ENCODE measurements at regions of chr12 and their contacts with region 1.

Region 1: GRCh38 chr12:4269279-4269991 is 4.1 kb upstream of the CCND2 start:
- DNase-seq: peak; percentile 91
- H3K4me3 Mint-ChIP-seq: peak overlapping the region; percentile 95
- H3K27ac Mint-ChIP-seq: peak overlapping the region; percentile 90
- H3K4me1 Mint-ChIP-seq: peaks cover 26% of the 10 kb centered on the region
- H3K27me3 Mint-ChIP-seq: peaks cover 13% of the 10 kb centered on the region

Region 2: DNA sequence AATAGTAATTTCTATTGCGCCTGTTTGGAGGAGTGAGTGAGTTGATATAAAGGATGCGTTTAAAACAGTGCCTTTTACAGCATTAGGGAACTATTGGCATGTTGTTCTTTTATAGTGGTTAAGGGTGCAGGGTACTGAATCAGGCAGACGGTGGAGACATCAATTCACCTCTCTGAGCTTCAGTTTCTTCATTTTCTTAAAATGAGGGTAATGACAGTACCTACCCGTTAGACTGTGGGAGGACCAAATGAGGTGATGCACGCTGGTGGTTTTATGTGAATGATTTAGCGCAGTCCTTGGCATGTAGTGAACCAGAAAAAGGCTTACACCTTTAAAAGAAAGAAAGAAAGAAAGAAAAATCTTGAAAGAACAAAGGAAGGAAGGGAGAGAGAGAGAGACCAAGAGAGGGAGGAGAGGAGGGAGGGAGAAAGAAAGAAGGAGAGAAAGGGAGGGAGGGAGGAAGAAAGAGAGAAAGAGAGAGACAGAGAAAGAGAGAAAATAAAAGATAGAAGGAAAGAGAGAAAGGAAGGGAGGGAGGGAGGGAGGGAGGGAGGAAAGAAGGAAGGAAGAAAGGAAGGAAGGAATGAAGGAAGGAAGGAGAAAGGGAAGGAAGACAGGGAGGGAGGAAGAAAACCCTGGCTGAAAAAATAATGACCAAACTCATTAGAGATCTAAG is 18.1 kb before region 1 on chr12:
- intact Hi-C with region 1: loop called (anchors 2 kb)
- DNase-seq: no peak
- H3K4me3 Mint-ChIP-seq: no peak overlapping the region
- H3K27ac Mint-ChIP-seq: peak overlapping the region; percentile 65
- H3K4me1 Mint-ChIP-seq: peaks cover 9% of the 10 kb centered on the region
- H3K27me3 Mint-ChIP-seq: peaks cover 11% of the 10 kb centered on the region

Region 3: DNA sequence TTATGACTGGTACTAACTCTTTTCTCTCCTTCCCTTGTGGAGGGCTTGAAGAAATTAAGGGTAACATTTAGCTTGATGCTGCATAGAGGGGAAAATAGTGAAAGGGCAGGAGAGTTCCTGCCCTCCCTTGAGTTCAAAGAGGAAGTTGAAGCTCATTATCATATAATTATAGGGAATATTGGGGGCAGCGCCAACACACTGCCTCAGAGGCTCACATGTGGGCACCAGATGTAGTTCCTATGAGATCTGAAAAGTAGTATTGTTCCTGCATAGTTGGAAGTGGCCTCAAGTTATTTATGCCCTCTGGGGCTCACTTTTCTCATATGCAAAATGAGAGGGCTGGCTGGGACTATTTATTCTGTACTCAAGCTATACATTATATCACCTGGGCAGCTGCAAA is 143.0 kb after region 1 on chr12:
- intact Hi-C with region 1: no loop called
- DNase-seq: no peak
- H3K4me3 Mint-ChIP-seq: no peak overlapping the region
- H3K27ac Mint-ChIP-seq: no peak overlapping the region
- H3K4me1 Mint-ChIP-seq: peaks cover 32% of the 10 kb centered on the region
- H3K27me3 Mint-ChIP-seq: peaks cover 38% of the 10 kb centered on the region

Region 4: DNA sequence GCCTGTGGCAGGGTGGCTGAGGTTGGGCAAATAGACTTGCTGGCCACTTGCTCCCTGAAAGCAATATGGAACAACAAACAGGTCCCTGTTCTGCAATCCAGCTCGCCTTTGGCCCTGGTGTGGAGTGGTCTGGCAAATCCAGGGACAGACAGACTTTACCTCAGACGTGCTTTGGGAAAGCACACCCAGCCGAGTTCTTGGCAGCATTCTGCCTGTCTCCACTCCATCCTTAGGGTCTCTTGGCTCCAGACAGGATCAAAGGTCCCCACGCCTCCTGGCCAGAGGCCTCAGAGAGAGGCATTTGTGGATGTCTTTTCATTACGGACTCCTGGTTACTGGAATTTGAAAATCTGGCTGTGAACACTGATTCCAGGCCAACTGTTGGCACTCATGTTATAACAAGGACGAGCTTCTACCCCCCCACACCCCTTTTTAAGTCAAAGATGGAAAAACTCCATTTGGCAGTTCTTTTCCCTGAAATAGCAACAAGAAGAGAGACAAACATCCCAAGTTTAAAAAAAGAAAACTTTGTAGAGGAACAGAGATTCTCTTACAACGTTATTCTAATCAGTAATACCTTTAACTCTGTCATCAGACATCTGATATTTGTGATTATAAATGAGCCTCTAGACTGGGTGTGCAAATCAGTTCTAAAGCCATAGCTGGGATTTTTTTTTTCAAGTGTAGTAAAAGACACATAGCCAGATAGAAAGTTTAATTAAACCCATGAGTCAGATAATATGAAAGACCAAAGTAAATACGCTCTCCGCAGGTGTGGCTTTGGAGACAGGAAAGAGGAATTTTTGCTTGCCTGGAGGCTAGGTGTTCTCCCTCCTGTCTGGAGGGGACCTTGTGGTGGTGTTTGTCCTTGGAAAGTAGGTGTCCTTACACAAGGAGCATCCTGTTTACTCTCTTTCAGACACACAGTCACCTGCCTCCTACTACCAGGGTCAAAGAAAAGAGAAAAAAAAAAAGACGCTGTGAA is 511.5 kb after region 1 on chr12:
- intact Hi-C with region 1: no loop called
- DNase-seq: no peak
- H3K4me3 Mint-ChIP-seq: no peak overlapping the region
- H3K27ac Mint-ChIP-seq: no peak overlapping the region
- H3K4me1 Mint-ChIP-seq: no peaks in the 10 kb centered on the region
- H3K27me3 Mint-ChIP-seq: peaks cover 35% of the 10 kb centered on the region

Measured in activated T-helper 2 cell treated with anti-CD3 and anti-CD28 coated beads, Interferon-gamma antibody, Interleukin-2, Interleukin-4, amounts not matched to agents 10 μg/mL and 5 μg/mL and 100 μg/mL, durations not matched to agents 14 hours and 24 hours and 36 hours (primary cell).